ENCODE measurements at regions of chr2 and their contacts with region 1.

Region 1: DNA sequence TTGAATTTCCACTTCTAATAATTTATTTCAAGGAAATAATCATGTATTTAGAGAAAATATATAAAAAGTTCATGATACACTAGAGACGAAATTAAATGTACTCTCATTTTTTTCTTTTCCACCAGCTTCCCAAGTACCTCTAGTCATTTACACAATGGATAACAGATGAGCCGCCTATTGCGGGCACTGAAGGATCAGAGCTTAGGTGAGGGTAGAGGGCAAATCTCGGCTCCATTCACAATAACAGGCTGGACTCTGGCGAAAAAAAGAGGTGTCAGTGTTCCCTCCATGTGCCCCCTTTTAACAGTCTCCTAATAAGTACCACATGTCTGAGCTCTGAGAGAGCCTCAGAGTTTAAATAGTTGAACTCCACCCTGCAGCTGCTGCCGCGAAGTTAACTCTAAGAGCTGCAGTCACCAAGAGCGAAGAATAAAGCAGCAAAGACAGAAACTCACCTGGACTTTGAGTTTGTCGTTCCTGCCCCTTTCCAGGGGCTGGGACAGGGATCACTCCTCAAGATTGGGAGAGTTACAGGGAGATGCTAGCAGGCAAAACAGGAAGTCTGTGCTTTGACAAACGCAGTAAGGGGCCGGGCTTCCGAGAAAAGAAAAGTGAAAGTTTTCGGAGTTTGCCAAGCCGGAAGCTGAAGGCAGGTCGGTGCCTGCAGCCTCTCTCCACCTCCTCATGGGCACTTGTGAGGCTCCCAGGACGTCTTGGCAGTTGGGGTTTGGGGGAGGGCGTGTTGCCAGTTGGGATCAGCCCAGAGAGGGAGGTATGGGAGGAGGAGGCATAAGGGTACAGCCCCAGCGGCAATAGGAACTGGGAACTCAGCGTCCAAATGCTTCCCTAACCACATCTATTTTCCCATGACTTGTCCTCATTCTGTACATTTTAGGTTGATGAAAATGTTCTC is at the start of gene SP110:
- DNase-seq: peak; percentile 86
- ATAC-seq: peak; percentile 92
- H3K4me3 Mint-ChIP-seq: peak within 1 kb of the TSS; percentile 90
- H3K27ac Mint-ChIP-seq: peak within 1 kb of the TSS; percentile 94
- H3K4me1 Mint-ChIP-seq: peaks cover 65% of the 10 kb centered on the region
- H3K27me3 Mint-ChIP-seq: no peaks in the 10 kb centered on the region
- CTCF ChIP-seq: no peak
- total RNA-seq, gene SP110: 67.0 to 69.4 TPM

Region 2: GRCh38 chr2:230319211-230319862 is 99.7 kb after region 1 on chr2:
- CTCF ChIA-PET with region 1: interaction called, 4 read pairs
- POLR2A ChIA-PET with region 1: no interaction called
- intact Hi-C with region 1: loop called (anchors 5 kb)
- DNase-seq: peak; percentile 88
- ATAC-seq: peak; percentile 96
- H3K4me3 Mint-ChIP-seq: peak overlapping the region; percentile 45
- H3K27ac Mint-ChIP-seq: peak overlapping the region; percentile 91
- H3K4me1 Mint-ChIP-seq: peaks cover 57% of the 10 kb centered on the region
- H3K27me3 Mint-ChIP-seq: no peaks in the 10 kb centered on the region
- CTCF ChIP-seq: no peak

Region 3: DNA sequence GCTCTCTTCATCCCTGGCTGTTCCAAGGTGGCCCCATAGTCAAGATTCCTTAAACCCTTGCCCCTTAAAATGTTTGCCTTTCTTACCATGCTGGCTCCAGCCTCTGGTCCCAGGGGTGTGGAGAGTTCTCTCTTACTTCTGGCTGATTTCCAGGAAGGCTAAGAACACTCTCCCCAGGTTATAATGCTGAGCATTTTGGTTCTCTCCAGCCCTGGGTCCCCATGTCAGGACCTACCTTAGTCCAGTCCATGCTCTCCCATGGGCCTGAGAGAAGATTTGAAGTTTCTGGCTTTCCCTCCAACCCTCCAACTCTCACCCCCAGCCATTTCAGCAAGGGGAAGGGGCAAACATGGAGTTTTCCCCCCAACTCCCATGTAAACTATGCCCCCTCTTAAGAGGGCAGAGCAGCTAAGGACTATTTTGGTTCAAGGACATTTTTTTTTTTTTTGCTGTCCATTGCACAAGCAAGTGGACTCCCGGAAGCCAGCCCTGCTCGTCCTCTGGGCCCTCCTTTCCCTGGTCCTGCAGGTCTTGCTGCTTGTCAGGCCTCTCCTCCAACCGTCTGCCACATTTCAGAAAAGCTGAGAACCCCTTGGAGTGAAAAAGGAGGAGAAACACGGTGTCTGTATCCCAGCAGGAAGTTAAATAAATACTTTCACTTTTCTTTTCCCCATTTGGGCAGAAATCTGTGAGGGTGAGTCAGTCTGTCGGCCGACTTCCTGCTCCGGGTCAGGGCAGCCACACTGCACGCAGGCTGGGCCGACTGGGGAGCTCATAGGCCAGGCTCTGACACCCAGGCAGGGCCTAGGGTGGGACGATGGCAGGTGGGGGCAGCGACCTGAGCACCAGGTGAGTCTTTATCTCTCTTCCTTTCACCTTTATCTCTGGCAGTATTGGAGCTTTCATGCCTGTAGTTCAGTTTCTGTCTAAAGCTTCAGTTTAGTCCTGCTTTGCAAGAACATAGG is 107.1 kb after region 1 on chr2 and contains the start of gene SP140L:
- CTCF ChIA-PET with region 1: interaction called, 4 read pairs
- POLR2A ChIA-PET with region 1: interaction called, 18 read pairs
- intact Hi-C with region 1: no loop called
- DNase-seq: peak; percentile 90
- ATAC-seq: peak; percentile 98
- H3K4me3 Mint-ChIP-seq: peak within 1 kb of the TSS; percentile 97
- H3K27ac Mint-ChIP-seq: peak within 1 kb of the TSS; percentile 93
- H3K4me1 Mint-ChIP-seq: peaks cover 60% of the 10 kb centered on the region
- H3K27me3 Mint-ChIP-seq: no peaks in the 10 kb centered on the region
- CTCF ChIP-seq: no peak
- total RNA-seq, gene SP140L: 43.7 to 43.8 TPM

Region 4: GRCh38 chr2:230430957-230431910 is 211.6 kb after region 1 on chr2:
- CTCF ChIA-PET with region 1: no interaction called
- POLR2A ChIA-PET with region 1: no interaction called
- intact Hi-C with region 1: no loop called
- DNase-seq: no peak
- ATAC-seq: peak; percentile 52
- H3K4me3 Mint-ChIP-seq: no peak overlapping the region
- H3K27ac Mint-ChIP-seq: peak overlapping the region; percentile 47
- H3K4me1 Mint-ChIP-seq: peaks cover 60% of the 10 kb centered on the region
- H3K27me3 Mint-ChIP-seq: no peaks in the 10 kb centered on the region
- CTCF ChIP-seq: no peak

Region 5: DNA sequence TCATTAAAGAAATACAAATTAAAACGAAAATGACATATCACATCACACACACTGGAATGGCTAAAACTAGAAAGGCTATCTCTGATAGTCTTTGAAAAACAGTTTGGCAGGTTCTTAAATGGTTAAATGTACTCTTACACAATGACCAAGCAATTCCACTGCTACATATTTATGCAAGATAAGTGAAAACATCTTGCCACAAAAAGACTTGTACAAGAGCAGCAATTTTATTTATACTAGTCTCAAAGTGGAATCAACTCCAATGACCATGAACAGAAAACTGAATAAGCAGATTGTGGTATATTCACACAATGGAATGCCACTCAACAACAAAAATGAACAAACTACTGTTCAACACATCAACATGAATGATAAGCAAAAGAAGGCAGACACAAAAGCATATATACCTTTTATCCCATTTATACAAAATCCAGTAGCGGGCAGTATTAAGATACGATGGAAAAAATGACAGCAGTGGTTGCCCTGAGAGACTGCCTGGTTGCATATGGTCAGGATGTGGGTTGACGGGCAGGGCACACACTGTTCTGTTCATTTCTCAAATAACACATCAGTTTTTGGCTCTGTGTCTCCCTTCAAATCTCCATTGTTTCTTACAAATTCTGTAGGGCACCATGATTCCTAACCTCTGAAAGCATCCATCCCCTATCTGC is 221.7 kb after region 1 on chr2:
- CTCF ChIA-PET with region 1: no interaction called
- POLR2A ChIA-PET with region 1: no interaction called
- intact Hi-C with region 1: loop called (anchors 10 kb)
- DNase-seq: peak; percentile 82
- ATAC-seq: peak; percentile 87
- H3K4me3 Mint-ChIP-seq: peak overlapping the region; percentile 43
- H3K27ac Mint-ChIP-seq: peak overlapping the region; percentile 89
- H3K4me1 Mint-ChIP-seq: peaks cover 61% of the 10 kb centered on the region
- H3K27me3 Mint-ChIP-seq: no peaks in the 10 kb centered on the region
- CTCF ChIP-seq: no peak

Region 6: DNA sequence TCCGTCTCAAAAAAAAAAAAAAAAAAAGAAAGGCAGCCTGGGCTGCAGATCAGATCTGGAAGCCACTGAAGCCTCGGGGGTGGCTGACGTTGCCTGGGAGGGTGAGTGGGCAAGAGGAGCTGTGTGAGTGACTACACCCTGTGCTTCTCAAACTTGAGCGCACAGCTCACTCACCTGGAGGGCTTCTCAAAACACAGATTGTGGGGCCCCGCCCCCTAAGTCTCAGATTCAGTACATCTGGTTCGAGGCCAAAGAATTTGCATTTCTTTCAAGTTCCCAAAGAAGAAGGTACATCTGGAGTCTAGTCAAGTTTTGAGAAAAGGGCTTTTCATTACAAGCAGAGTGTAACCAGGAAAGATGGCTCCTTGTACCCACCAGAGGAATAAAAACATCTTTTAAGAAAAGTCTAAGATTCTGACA is 395.2 kb after region 1 on chr2:
- CTCF ChIA-PET with region 1: no interaction called
- POLR2A ChIA-PET with region 1: no interaction called
- intact Hi-C with region 1: loop called (anchors 5 kb)
- DNase-seq: peak; percentile 82
- ATAC-seq: peak; percentile 77
- H3K4me3 Mint-ChIP-seq: no peak overlapping the region
- H3K27ac Mint-ChIP-seq: peak overlapping the region; percentile 23
- H3K4me1 Mint-ChIP-seq: peaks cover 24% of the 10 kb centered on the region
- H3K27me3 Mint-ChIP-seq: no peaks in the 10 kb centered on the region
- CTCF ChIP-seq: no peak